ENCODE measurements at regions of chr12 and their contacts with region 1.

Region 1: GRCh38 chr12:132986001-132986912 is at the start of gene ZNF26:
- DNase-seq: peak; percentile 94
- H3K4me3 ChIP-seq: peak within 1 kb of the TSS; percentile 68 to 87 (median 82)
- H3K27ac ChIP-seq: peak within 1 kb of the TSS; percentile 81 to 90 (median 86)
- H3K4me1 ChIP-seq: peaks cover 0 to 18% (median 15%) of the 10 kb centered on the region in 4 donors
- H3K27me3 ChIP-seq: no peaks in the 10 kb centered on the region
- CTCF ChIP-seq: no peak
- EP300 ChIP-seq: peak in 2 of 4 donors; percentile 40 to 54
- POLR2A ChIP-seq: peak in 1 of 2 donors; percentile 47
- total RNA-seq, gene ZNF26: 7.9 to 10.8 (median 9.2) TPM

Region 2: GRCh38 chr12:132956011-132956788 is 30.1 kb before region 1 on chr12 and contains the start of gene ZNF605:
- intact Hi-C with region 1: loop called (anchors 2 kb)
- DNase-seq: peak; percentile 93
- H3K4me3 ChIP-seq: peak within 1 kb of the TSS; percentile 87 to 90 (median 88)
- H3K27ac ChIP-seq: peak within 1 kb of the TSS; percentile 94 to 96 (median 94)
- H3K4me1 ChIP-seq: peaks cover 0 to 20% (median 19%) of the 10 kb centered on the region in 4 donors
- H3K27me3 ChIP-seq: no peaks in the 10 kb centered on the region
- CTCF ChIP-seq: no peak
- EP300 ChIP-seq: no peak
- POLR2A ChIP-seq: no peak
- total RNA-seq, gene ZNF605: 6.2 to 15.5 (median 8.3) TPM

Region 3: GRCh38 chr12:132998741-132999140 is 12.5 kb after region 1 on chr12:
- intact Hi-C with region 1: no loop called
- DNase-seq: no peak
- H3K4me3 ChIP-seq: no peak overlapping the region
- H3K27ac ChIP-seq: no peak overlapping the region
- H3K4me1 ChIP-seq: no peaks in the 10 kb centered on the region
- H3K27me3 ChIP-seq: no peaks in the 10 kb centered on the region
- CTCF ChIP-seq: no peak
- EP300 ChIP-seq: no peak
- POLR2A ChIP-seq: no peak

Region 4: GRCh38 chr12:133010657-133011297 is 24.5 kb after region 1 on chr12:
- intact Hi-C with region 1: no loop called
- DNase-seq: no peak
- H3K4me3 ChIP-seq: no peak overlapping the region
- H3K27ac ChIP-seq: no peak overlapping the region
- H3K4me1 ChIP-seq: no peaks in the 10 kb centered on the region
- H3K27me3 ChIP-seq: no peaks in the 10 kb centered on the region
- CTCF ChIP-seq: no peak
- EP300 ChIP-seq: no peak
- POLR2A ChIP-seq: no peak

Region 5: GRCh38 chr12:133037207-133038005 is 51.1 kb after region 1 on chr12 and contains the start of gene ZNF84:
- intact Hi-C with region 1: loop called (anchors 2 kb)
- DNase-seq: peak; percentile 98
- H3K4me3 ChIP-seq: peak within 1 kb of the TSS; percentile 64 to 84 (median 80)
- H3K27ac ChIP-seq: peak within 1 kb of the TSS; percentile 90 to 97 (median 95)
- H3K4me1 ChIP-seq: peaks cover 0 to 13% (median 3%) of the 10 kb centered on the region in 4 donors
- H3K27me3 ChIP-seq: no peaks in the 10 kb centered on the region
- CTCF ChIP-seq: no peak
- EP300 ChIP-seq: peak in 1 of 4 donors; percentile 68
- POLR2A ChIP-seq: peak; percentile 18 to 33
- total RNA-seq, gene ZNF84: 28.8 to 32.7 (median 31.4) TPM

Region 6: GRCh38 chr12:133080368-133081158 is 94.3 kb after region 1 on chr12 and contains the start of gene ZNF140:
- intact Hi-C with region 1: loop called (anchors 1 kb)
- DNase-seq: peak; percentile 98
- H3K4me3 ChIP-seq: peak within 1 kb of the TSS; percentile 63 to 90 (median 78)
- H3K27ac ChIP-seq: peak within 1 kb of the TSS; percentile 92 to 98 (median 96)
- H3K4me1 ChIP-seq: peaks cover 0 to 10% (median 4%) of the 10 kb centered on the region in 4 donors
- H3K27me3 ChIP-seq: no peaks in the 10 kb centered on the region
- CTCF ChIP-seq: peak in 2 of 4 experiments; percentile 23 to 38
- EP300 ChIP-seq: peak in 2 of 4 donors; percentile 6 to 24
- POLR2A ChIP-seq: peak; percentile 49 to 56
- total RNA-seq, gene ZNF140: 12.4 to 18.8 (median 15.4) TPM

Region 7: DNA sequence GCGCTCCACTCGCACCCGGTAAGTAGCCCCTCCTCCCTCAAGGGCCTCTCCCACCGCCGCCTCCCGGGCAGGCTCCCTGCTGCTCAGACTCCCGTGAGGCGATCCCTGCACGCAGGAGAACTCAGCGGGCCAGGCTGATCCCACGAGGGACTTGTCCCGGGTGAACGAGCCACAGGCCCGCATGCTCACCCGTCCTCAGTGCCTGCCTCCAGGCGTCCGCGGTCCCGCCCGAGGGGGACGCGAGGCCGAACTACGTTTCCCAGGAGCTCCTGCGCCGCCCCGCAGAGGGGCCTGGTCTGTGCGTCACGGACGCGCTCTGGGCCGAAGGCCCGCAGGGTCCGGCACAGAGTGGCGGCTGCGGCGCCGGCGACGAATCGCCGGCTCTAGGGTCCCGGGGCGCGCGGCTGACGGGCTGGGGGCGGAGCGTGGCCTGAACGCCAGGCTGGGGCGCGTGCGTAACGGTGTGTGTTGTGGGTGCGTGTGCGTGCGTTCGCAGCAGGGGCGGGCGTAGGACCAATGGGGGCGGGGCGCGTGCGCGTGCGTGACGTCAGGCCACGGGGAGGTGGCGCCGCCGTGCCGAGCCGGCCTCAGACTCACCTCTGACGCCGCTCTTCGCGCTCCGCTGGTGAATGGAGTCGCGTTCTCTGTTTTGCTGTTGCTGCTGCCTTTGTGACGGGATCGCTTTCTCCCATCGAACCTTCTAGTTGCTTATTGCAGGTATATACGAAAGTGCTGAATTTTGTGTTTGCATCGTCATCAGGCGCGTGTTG is 144.0 kb after region 1 on chr12 and contains the starts of genes ZNF10 and ZNF891:
- intact Hi-C with region 1: loop called (anchors 2 kb)
- DNase-seq: peak; percentile 98
- H3K4me3 ChIP-seq: peak within 1 kb of the TSS; percentile 77 to 92 (median 82)
- H3K27ac ChIP-seq: peak within 1 kb of the TSS; percentile 95 to 98 (median 96)
- H3K4me1 ChIP-seq: peaks cover 0 to 14% (median 6%) of the 10 kb centered on the region in 4 donors
- H3K27me3 ChIP-seq: no peaks in the 10 kb centered on the region
- CTCF ChIP-seq: no peak
- EP300 ChIP-seq: peak; percentile 15 to 91 (median 74)
- POLR2A ChIP-seq: peak; percentile 69 to 72
- total RNA-seq, gene ZNF10: 10.5 to 22.8 (median 13.1) TPM
- total RNA-seq, gene ZNF891: 3.1 to 6.1 (median 4.4) TPM

Region 8: GRCh38 chr12:133181238-133181959 is 195.1 kb after region 1 on chr12 and contains the start of gene ZNF268:
- intact Hi-C with region 1: loop called (anchors 1 kb)
- DNase-seq: peak; percentile 94
- H3K4me3 ChIP-seq: peak within 1 kb of the TSS; percentile 64 to 82 (median 76)
- H3K27ac ChIP-seq: peak within 1 kb of the TSS; percentile 69 to 81 (median 76)
- H3K4me1 ChIP-seq: peaks cover 0 to 13% (median 6%) of the 10 kb centered on the region in 4 donors
- H3K27me3 ChIP-seq: no peaks in the 10 kb centered on the region
- CTCF ChIP-seq: peak; percentile 45 to 68 (median 58)
- EP300 ChIP-seq: peak in 2 of 4 donors; percentile 13 to 19
- POLR2A ChIP-seq: no peak
- total RNA-seq, gene ZNF268: 12.8 to 21.9 (median 19.5) TPM